HepG2 (cell line): ENCODE measurements at regions of chr1 and their contacts with region 1.

Region 1: GRCh38 chr1:239140968-239141367 is 245.4 kb upstream of the CHRM3 start:
- DNase-seq: no peak
- ATAC-seq: no peak
- H3K4me3 ChIP-seq: no peak overlapping the region
- H3K27ac ChIP-seq: no peak overlapping the region
- H3K4me1 ChIP-seq: no peaks in the 10 kb centered on the region
- H3K27me3 ChIP-seq: no peaks in the 10 kb centered on the region
- CTCF ChIP-seq: no peak
- EP300 ChIP-seq: no peak
- POLR2A ChIP-seq: no peak
- RAD21 ChIP-seq: no peak

Region 2: DNA sequence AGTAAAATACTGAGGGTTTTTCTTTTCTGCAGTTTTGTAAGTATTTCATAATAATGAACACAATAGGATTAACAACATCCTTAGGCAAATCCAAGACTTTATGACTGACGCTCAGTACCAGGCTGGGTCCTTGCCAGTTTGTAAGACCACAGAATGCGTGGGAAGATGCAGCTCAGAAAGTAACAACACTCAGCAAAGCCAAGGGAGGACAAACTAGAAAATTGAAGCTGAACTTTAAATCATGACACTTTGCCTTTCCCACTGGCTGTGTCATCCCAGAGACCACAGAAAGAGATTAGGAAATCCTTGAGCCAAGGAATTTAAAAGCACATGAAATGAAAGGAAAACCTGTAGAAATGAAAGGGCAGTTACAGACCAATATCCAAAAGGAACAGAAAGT is 180.9 kb before region 1 on chr1:
- CTCF ChIA-PET with region 1: no interaction called
- POLR2A ChIA-PET with region 1: no interaction called
- in situ Hi-C with region 1: no loop called
- intact Hi-C with region 1: no loop called
- DNase-seq: no peak
- ATAC-seq: no peak
- H3K4me3 ChIP-seq: no peak overlapping the region
- H3K27ac ChIP-seq: no peak overlapping the region
- H3K4me1 ChIP-seq: no peaks in the 10 kb centered on the region
- H3K27me3 ChIP-seq: no peaks in the 10 kb centered on the region
- CTCF ChIP-seq: no peak
- EP300 ChIP-seq: no peak
- POLR2A ChIP-seq: no peak
- RAD21 ChIP-seq: no peak

Region 3: GRCh38 chr1:239112101-239112935 is 28.6 kb before region 1 on chr1:
- CTCF ChIA-PET with region 1: no interaction called
- POLR2A ChIA-PET with region 1: no interaction called
- in situ Hi-C with region 1: loop called (anchors 5 kb)
- intact Hi-C with region 1: no loop called
- DNase-seq: no peak
- ATAC-seq: no peak
- H3K4me3 ChIP-seq: no peak overlapping the region
- H3K27ac ChIP-seq: no peak overlapping the region
- H3K4me1 ChIP-seq: no peaks in the 10 kb centered on the region
- H3K27me3 ChIP-seq: no peaks in the 10 kb centered on the region
- CTCF ChIP-seq: no peak
- EP300 ChIP-seq: no peak
- POLR2A ChIP-seq: no peak
- RAD21 ChIP-seq: no peak